Prostate gland (tissue), 2 donors: ENCODE measurements at regions of chr5 and their contacts with region 1.

Region 1: GRCh38 chr5:108748401-108749127 is 867 bp downstream of the FER start:
- DNase-seq: peak; percentile 99
- H3K4me3 ChIP-seq: peak overlapping the region; percentile 89 to 96
- H3K27ac ChIP-seq: peak overlapping the region; percentile 95 to 98
- H3K4me1 ChIP-seq: no peaks in the 10 kb centered on the region
- H3K27me3 ChIP-seq: no peaks in the 10 kb centered on the region
- CTCF ChIP-seq: peak in 3 of 4 experiments; percentile 7 to 59 (median 11)
- POLR2A ChIP-seq: peak; percentile 98

Region 2: DNA sequence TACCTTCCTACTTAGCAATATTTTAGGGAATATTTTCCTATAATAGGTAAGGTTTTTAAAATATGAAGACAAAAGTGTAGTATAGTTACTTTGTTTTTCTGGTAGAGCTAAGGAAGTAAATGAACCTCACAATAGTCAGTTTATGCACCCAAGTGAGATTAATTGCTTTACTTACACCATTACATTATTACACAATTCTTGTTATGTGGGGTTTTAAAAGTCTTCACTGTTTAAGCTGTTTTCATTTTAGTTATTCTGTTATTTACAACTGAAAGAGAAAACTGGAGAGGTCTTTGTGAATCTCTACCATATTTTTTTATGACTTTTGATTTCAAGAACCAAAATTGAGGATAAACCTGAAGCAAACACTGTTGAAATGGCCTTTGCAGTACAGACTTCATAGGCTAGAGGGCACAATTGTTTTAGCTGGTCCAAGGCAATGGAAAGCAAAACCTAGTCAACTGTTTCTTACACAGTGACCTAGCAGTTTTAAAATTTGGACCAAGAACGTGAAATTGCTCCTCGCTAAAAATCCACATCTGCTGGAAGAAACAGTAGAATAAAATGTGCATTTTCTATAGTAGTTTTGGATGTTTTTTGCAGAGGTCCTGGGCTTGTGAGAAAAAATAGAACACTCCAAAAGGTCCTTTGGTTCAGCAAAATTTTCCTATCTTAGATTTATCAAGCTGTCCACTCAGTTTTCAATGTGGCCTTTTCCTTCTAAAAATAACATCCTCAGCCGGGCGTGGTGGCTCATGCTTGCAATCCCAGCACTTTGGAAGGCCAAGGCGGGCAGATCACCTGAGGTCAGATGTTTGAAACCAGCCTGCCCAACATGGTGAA is 67.3 kb before region 1 on chr5:
- intact Hi-C with region 1: loop called (anchors 5 kb)
- DNase-seq: peak; percentile 10
- H3K4me3 ChIP-seq: no peak overlapping the region
- H3K27ac ChIP-seq: no peak overlapping the region
- H3K4me1 ChIP-seq: no peaks in the 10 kb centered on the region
- H3K27me3 ChIP-seq: no peaks in the 10 kb centered on the region
- CTCF ChIP-seq: peak; percentile 22 to 74 (median 58)
- POLR2A ChIP-seq: no peak

Region 3: DNA sequence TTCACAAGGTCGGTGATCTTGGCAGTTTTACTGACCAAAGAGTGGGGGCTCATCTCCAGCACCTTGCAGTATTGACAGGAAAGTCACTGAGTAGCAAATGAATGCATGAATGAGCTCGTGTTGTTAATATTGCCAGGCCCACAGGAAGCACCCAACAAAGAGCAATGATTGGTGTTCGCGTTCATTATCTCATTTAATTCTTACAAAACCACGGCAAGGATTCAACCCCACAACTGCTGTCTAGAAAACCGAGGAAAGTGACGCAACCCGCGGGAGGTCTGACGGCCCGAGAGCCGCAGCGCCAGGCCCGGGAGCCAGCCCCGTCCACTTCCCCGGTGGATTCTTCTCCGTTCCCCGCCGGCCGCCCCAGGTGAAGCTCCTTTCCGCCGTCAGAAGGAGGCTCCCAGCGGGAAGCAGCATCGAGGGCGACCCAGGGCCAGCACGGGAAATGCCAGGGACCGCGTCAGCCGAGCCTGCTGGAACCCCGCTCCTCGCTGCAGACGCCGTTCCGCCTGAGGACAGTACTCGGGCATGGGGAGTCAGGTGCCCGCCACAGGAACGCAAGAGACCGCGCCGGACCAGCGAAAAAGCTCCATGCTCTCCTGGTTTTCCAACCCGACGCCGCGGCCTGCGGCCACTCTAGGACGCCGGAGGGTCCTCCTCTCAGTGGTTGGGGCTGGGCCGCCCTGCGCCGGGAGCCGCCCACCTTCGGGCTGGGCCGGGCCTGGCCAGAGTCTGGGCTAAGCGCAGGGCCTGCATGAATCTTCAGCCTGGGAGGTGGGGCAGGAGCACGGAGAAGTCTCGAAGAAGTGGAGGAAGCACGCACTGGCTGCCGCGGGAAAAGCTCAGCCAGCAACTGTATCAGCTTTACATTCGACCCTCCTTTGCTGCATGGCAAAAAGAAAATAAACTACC is 20.7 kb before region 1 on chr5:
- intact Hi-C with region 1: loop called (anchors 2 kb)
- DNase-seq: peak; percentile 89
- H3K4me3 ChIP-seq: peak overlapping the region; percentile 61 to 64
- H3K27ac ChIP-seq: peak overlapping the region; percentile 86
- H3K4me1 ChIP-seq: no peaks in the 10 kb centered on the region
- H3K27me3 ChIP-seq: no peaks in the 10 kb centered on the region
- CTCF ChIP-seq: peak in 1 of 4 experiments; percentile 11
- POLR2A ChIP-seq: peak; percentile 79

Region 4: DNA sequence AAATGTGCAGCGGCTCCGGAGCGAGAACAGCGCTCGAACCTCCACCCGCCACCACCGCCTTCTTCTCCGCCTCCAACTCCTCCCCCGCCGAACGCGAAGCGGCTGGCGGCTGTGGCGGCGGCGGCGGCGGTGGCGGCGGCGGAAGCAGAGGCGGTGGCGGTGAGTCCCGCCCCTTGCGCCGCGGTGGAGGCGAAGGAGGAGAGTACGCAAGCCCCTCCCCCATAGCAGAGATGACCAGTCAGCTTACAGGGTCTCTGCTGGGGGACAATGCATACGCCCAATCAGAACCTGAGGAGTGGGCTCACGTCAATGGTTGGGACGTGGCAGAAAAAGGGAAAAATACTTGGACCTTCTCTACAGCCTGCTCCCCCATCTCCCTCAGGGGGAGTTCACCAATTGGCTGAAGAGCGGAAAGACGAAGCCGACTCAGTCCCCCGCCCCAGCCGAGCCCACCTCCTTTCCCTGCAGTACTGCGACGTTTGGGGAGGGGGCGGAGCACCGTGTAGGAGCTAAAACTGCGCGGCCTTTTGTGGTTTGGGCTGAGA is 661.4 kb after region 1 on chr5 and contains the start of gene PJA2:
- intact Hi-C with region 1: loop called (anchors 2 kb)
- DNase-seq: peak; percentile 99
- H3K4me3 ChIP-seq: peak within 1 kb of the TSS; percentile 88 to 91
- H3K27ac ChIP-seq: peak within 1 kb of the TSS; percentile 99
- H3K4me1 ChIP-seq: peaks cover 4% of the 10 kb centered on the region
- H3K27me3 ChIP-seq: no peaks in the 10 kb centered on the region
- CTCF ChIP-seq: peak in 3 of 4 experiments; percentile 19 to 84 (median 57)
- POLR2A ChIP-seq: peak; percentile 81
- total RNA-seq, gene PJA2: 94.8 to 119 TPM

Region 5: DNA sequence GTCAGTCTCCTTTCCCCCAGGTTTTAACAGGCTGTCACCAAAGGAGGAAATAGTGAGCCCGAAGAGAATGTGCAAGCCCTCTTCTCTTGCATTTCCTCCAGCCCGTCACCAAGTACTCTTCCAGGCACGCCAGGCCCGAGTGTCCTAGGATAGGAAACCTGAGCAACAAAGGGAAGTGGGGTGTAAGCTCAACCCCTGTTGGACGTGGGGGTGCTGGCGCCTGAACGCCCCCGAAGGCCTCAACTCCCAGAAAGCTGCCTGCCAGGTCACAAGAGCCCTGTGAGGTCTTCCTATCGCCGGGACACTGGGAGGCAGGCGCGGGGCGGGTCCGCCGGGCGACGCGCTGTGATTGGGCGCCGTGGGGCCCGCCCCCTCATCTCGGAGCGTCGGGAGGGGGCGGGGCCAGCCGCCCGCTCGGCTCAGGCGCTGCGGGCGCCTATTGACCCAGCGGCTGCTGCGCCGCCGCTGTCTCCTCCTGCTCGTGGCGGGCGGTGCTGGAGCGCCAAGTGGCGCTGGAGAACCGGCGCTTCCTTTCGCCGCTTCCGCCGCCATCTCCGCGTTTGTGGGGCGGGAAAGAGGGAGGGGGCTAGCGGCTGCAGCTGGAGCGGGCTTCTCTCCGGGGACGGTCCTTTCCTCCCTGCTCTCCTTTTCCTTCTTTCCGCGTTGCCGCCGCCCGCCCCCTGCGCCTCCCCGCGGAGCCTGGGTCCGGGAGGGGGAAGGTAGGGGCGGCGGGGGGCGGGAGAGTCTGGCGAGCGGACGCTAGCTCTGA is 940.6 kb after region 1 on chr5:
- intact Hi-C with region 1: loop called (anchors 2 kb)
- DNase-seq: peak; percentile 82
- H3K4me3 ChIP-seq: peak overlapping the region; percentile 79 to 91
- H3K27ac ChIP-seq: peak overlapping the region; percentile 97 to 98
- H3K4me1 ChIP-seq: no peaks in the 10 kb centered on the region
- H3K27me3 ChIP-seq: no peaks in the 10 kb centered on the region
- CTCF ChIP-seq: peak in 3 of 4 experiments; percentile 10 to 24 (median 17)
- POLR2A ChIP-seq: peak; percentile 95